Mammary epithelial cell (primary cell): ENCODE measurements at regions of chr5 and their contacts with region 1.

Region 1: GRCh38 chr5:163695830-163696578 is 190.6 kb downstream of the MAT2B start:
- DNase-seq: peak; percentile 68
- H3K4me3 ChIP-seq: no peak overlapping the region
- H3K27ac ChIP-seq: no peak overlapping the region
- H3K4me1 ChIP-seq: peaks cover 3% of the 10 kb centered on the region
- H3K27me3 ChIP-seq: no peaks in the 10 kb centered on the region
- CTCF ChIP-seq: peak; percentile 78 to 81

Region 2: DNA sequence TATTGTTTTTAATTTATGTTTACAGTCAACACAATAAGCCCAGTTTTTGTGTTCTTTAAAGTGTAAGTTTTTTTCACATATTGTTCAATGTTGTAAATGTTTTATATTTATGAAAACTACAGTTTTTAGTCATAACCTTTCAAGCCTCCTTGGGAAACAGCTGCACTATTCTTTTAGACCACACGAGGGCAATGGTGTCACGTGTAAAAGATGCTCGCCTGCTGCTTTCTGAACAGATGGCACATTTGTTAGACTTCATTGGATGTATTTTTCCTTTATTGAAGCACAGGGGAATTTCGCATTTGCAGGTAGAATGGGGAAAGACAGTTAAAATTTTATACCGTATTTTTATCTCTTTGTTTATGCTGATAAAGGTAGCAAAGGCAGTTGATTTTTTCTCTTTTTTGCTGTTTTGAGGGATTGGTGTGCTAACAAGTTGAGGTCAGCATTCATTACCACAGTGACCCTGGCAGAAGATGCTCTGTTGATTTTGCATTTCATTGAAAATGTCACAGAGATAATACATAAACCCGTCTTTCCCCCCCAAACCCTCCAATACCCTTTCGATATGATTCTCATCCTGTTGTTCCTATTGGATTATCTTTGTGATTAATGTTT is 131.6 kb before region 1 on chr5:
- CTCF ChIA-PET with region 1: interaction called, 3 read pairs
- dilution Hi-C with region 1: no loop called
- in situ Hi-C with region 1: no loop called
- intact Hi-C with region 1: loop called (anchors 1 kb)
- DNase-seq: peak; percentile 42
- H3K4me3 ChIP-seq: no peak overlapping the region
- H3K27ac ChIP-seq: no peak overlapping the region
- H3K4me1 ChIP-seq: peaks cover 9% of the 10 kb centered on the region
- H3K27me3 ChIP-seq: no peaks in the 10 kb centered on the region
- CTCF ChIP-seq: peak; percentile 77 to 90

Region 3: GRCh38 chr5:163580516-163580915 is 115.5 kb before region 1 on chr5:
- CTCF ChIA-PET with region 1: no interaction called
- dilution Hi-C with region 1: no loop called
- in situ Hi-C with region 1: no loop called
- intact Hi-C with region 1: no loop called
- DNase-seq: peak; percentile 5
- H3K4me3 ChIP-seq: no peak overlapping the region
- H3K27ac ChIP-seq: no peak overlapping the region
- H3K4me1 ChIP-seq: peaks cover 16% of the 10 kb centered on the region
- H3K27me3 ChIP-seq: no peaks in the 10 kb centered on the region
- CTCF ChIP-seq: no peak

Region 4: GRCh38 chr5:164470312-164470711 is 774.3 kb after region 1 on chr5:
- CTCF ChIA-PET with region 1: no interaction called
- dilution Hi-C with region 1: no loop called
- in situ Hi-C with region 1: loop called (anchors 25 kb)
- intact Hi-C with region 1: loop called (anchors 1 kb)
- DNase-seq: no peak
- H3K4me3 ChIP-seq: no peak overlapping the region
- H3K27ac ChIP-seq: no peak overlapping the region
- H3K4me1 ChIP-seq: no peaks in the 10 kb centered on the region
- H3K27me3 ChIP-seq: no peaks in the 10 kb centered on the region
- CTCF ChIP-seq: no peak

Region 5: DNA sequence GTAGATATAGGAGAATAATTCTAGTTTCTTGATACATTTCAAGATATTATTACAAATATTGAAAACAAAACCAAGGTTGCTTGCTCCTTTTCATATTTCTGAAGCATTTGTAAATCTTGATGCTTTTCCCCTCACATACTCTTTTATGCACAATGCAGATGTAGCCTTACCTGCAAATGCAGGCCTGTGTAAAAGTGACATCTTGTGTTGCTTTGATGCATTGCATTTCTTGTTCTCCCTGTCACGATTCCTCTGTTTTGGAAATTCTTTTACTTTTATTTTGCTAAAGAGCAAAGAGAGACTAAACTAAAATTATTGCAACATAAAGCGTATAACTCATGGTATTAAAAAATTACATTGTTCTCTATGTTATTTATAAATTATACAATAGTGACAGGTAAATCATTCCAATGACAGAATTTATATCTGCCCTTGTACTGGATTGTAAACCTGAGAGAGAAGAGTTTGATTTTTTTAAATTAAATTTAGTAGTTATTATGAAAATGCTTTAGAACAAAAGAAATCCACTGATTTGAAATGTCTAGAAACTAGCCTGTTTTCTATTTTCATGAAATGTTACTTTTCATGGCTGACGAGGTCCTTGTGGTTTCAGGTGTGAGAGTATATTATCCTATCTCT is 779.5 kb after region 1 on chr5:
- CTCF ChIA-PET with region 1: no interaction called
- dilution Hi-C with region 1: no loop called
- in situ Hi-C with region 1: loop called (anchors 25 kb)
- intact Hi-C with region 1: loop called (anchors 1 kb)
- DNase-seq: peak; percentile 3
- H3K4me3 ChIP-seq: no peak overlapping the region
- H3K27ac ChIP-seq: no peak overlapping the region
- H3K4me1 ChIP-seq: no peaks in the 10 kb centered on the region
- H3K27me3 ChIP-seq: no peaks in the 10 kb centered on the region
- CTCF ChIP-seq: peak; percentile 70 to 82

Region 6: GRCh38 chr5:164504141-164504772 is 808.3 kb after region 1 on chr5:
- CTCF ChIA-PET with region 1: no interaction called
- dilution Hi-C with region 1: no loop called
- in situ Hi-C with region 1: no loop called
- intact Hi-C with region 1: loop called (anchors 1 kb)
- DNase-seq: peak; percentile 34
- H3K4me3 ChIP-seq: no peak overlapping the region
- H3K27ac ChIP-seq: no peak overlapping the region
- H3K4me1 ChIP-seq: no peaks in the 10 kb centered on the region
- H3K27me3 ChIP-seq: peaks cover 5% of the 10 kb centered on the region
- CTCF ChIP-seq: peak; percentile 75 to 84

Region 7: GRCh38 chr5:164672931-164673694 is 977.1 kb after region 1 on chr5:
- CTCF ChIA-PET with region 1: no interaction called
- dilution Hi-C with region 1: no loop called
- in situ Hi-C with region 1: no loop called
- intact Hi-C with region 1: loop called (anchors 5 kb)
- DNase-seq: peak; percentile 5
- H3K4me3 ChIP-seq: no peak overlapping the region
- H3K27ac ChIP-seq: no peak overlapping the region
- H3K4me1 ChIP-seq: no peaks in the 10 kb centered on the region
- H3K27me3 ChIP-seq: no peaks in the 10 kb centered on the region
- CTCF ChIP-seq: peak; percentile 28 to 50